ENCODE measurements at regions of chr12 and their contacts with region 1.

Region 1: GRCh38 chr12:47705566-47706425 is at the start of gene RPAP3:
- DNase-seq: peak; percentile 95
- ATAC-seq: peak; percentile 90
- H3K4me3 ChIP-seq: peak within 1 kb of the TSS; percentile 62 to 98 (median 83)
- H3K4me3 Mint-ChIP-seq: peak within 1 kb of the TSS; percentile 93
- H3K27ac ChIP-seq: peak within 1 kb of the TSS; percentile 88
- H3K27ac Mint-ChIP-seq: peak within 1 kb of the TSS; percentile 94
- H3K4me1 ChIP-seq: peaks cover 59 to 61% of the 10 kb centered on the region in 2 donors
- H3K4me1 Mint-ChIP-seq: peaks cover 71% of the 10 kb centered on the region
- H3K27me3 ChIP-seq: no peaks in the 10 kb centered on the region
- H3K27me3 Mint-ChIP-seq: no peaks in the 10 kb centered on the region
- CTCF ChIP-seq: peak; percentile 81
- total RNA-seq, gene RPAP3: 47.2 and 49.4 TPM in 2 replicates

Region 2: DNA sequence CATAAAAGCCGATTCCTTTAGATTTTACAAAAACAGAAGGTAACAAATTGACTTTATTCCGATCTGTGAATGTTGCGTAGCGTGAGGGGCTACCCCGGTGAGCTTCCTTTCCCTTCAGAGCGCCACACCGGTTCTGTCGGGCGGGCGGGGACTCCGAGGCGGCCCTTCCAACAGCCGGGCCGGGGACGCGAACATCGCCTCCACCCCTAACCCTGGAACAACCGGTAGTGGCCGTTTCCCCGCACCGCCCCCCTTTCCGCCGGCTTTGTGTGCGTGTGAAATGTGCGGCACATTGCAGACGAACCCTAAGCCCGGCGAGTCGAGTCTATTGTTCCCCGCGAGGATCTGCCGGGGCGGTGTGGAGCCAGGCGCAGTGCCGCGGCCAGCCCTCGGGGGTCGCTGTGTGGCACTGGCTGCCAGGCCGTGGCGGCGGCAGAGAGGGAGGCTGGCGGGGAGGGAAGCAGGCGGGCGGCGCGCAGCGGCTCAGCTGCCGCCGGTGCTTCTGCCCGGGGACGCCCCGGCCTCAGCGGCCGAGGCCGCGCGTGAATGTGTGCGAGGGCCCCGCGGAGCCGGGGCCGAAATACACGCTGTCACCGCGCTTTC is 1977.1 kb before region 1 on chr12:
- CTCF ChIA-PET with region 1: no interaction called
- POLR2A ChIA-PET with region 1: no interaction called
- intact Hi-C with region 1: loop called (anchors 2 kb)
- DNase-seq: peak; percentile 98
- ATAC-seq: peak; percentile 68
- H3K4me3 ChIP-seq: peak overlapping the region; percentile 87 to 98 (median 95)
- H3K4me3 Mint-ChIP-seq: peak overlapping the region; percentile 100
- H3K27ac ChIP-seq: peak overlapping the region; percentile 98 to 99
- H3K27ac Mint-ChIP-seq: peak overlapping the region; percentile 99
- H3K4me1 ChIP-seq: peaks cover 16 to 38% of the 10 kb centered on the region in 2 donors
- H3K4me1 Mint-ChIP-seq: peaks cover 36% of the 10 kb centered on the region
- H3K27me3 ChIP-seq: no peaks in the 10 kb centered on the region
- H3K27me3 Mint-ChIP-seq: no peaks in the 10 kb centered on the region
- CTCF ChIP-seq: peak; percentile 93

Region 3: DNA sequence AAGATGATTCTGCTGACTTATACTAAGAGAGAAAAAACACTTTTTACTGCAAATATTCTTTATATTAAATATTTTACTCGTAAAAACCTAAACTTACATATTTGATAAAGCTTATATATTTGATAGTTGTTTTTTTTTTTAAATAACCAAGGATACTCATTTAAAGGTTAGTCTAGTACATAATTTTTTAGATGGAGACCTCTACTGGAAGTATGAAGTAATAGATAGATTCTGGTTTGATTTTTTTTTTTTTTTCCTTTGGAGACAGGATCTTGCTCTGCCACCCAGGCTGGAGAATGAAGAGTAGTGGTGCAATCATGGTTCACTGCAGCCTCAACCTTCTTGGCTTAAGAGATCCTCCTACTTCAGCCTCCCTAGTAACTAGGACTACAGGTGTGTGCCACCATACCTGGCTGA is 1959.9 kb before region 1 on chr12:
- CTCF ChIA-PET with region 1: no interaction called
- POLR2A ChIA-PET with region 1: no interaction called
- intact Hi-C with region 1: no loop called
- DNase-seq: peak; percentile 38
- ATAC-seq: peak; percentile 49
- H3K4me3 ChIP-seq: no peak overlapping the region
- H3K4me3 Mint-ChIP-seq: no peak overlapping the region
- H3K27ac ChIP-seq: no peak overlapping the region
- H3K27ac Mint-ChIP-seq: no peak overlapping the region
- H3K4me1 ChIP-seq: peaks cover 0 to 4% of the 10 kb centered on the region in 2 donors
- H3K4me1 Mint-ChIP-seq: peaks cover 11% of the 10 kb centered on the region
- H3K27me3 ChIP-seq: no peaks in the 10 kb centered on the region
- H3K27me3 Mint-ChIP-seq: no peaks in the 10 kb centered on the region
- CTCF ChIP-seq: peak; percentile 66

Region 4: DNA sequence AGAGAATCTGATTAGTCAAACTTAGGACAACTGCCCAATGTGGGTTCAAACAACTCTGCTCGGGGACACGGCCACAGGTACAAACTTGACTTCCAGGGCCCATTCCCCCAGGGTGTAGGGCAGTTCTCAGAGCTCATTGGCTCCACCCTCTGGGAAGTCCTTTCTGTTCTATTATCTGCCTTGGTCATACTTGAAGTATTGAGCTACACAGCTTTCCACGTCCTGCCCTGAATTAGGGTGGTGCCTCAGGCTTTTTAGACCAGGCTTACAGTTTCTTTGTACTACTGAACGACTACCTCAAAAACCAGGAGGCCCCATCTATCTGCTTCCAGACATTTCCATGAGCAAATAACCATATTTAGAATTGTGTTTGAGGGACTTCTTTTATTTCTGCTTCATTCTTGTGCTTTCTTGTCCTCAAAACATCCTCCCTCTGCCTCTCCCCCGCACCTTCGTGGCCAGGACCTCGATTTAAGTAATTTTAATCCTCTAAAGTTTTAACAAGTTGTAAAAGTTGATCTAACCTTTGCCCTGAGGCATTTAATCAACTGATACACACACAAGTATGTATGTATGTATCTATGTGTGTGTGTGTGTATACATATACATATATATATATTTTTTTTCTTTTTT is 344.3 kb before region 1 on chr12:
- CTCF ChIA-PET with region 1: no interaction called
- POLR2A ChIA-PET with region 1: no interaction called
- intact Hi-C with region 1: loop called (anchors 2 kb)
- DNase-seq: peak; percentile 76
- ATAC-seq: peak; percentile 51
- H3K4me3 ChIP-seq: peak overlapping the region; percentile 24 to 52 (median 47)
- H3K4me3 Mint-ChIP-seq: peak overlapping the region; percentile 87
- H3K27ac ChIP-seq: peak overlapping the region; percentile 93 to 96
- H3K27ac Mint-ChIP-seq: peak overlapping the region; percentile 98
- H3K4me1 ChIP-seq: peaks cover 71% of the 10 kb centered on the region in 2 donors
- H3K4me1 Mint-ChIP-seq: peaks cover 62% of the 10 kb centered on the region
- H3K27me3 ChIP-seq: no peaks in the 10 kb centered on the region
- H3K27me3 Mint-ChIP-seq: no peaks in the 10 kb centered on the region
- CTCF ChIP-seq: no peak

Region 5: GRCh38 chr12:47383942-47384341 is 321.9 kb before region 1 on chr12:
- CTCF ChIA-PET with region 1: no interaction called
- POLR2A ChIA-PET with region 1: no interaction called
- intact Hi-C with region 1: no loop called
- DNase-seq: no peak
- ATAC-seq: no peak
- H3K4me3 ChIP-seq: no peak overlapping the region
- H3K4me3 Mint-ChIP-seq: peak overlapping the region; percentile 30
- H3K27ac ChIP-seq: no peak overlapping the region
- H3K27ac Mint-ChIP-seq: peak overlapping the region; percentile 42
- H3K4me1 ChIP-seq: peaks cover 21 to 22% of the 10 kb centered on the region in 2 donors
- H3K4me1 Mint-ChIP-seq: peaks cover 50% of the 10 kb centered on the region
- H3K27me3 ChIP-seq: no peaks in the 10 kb centered on the region
- H3K27me3 Mint-ChIP-seq: no peaks in the 10 kb centered on the region
- CTCF ChIP-seq: no peak

Region 6: DNA sequence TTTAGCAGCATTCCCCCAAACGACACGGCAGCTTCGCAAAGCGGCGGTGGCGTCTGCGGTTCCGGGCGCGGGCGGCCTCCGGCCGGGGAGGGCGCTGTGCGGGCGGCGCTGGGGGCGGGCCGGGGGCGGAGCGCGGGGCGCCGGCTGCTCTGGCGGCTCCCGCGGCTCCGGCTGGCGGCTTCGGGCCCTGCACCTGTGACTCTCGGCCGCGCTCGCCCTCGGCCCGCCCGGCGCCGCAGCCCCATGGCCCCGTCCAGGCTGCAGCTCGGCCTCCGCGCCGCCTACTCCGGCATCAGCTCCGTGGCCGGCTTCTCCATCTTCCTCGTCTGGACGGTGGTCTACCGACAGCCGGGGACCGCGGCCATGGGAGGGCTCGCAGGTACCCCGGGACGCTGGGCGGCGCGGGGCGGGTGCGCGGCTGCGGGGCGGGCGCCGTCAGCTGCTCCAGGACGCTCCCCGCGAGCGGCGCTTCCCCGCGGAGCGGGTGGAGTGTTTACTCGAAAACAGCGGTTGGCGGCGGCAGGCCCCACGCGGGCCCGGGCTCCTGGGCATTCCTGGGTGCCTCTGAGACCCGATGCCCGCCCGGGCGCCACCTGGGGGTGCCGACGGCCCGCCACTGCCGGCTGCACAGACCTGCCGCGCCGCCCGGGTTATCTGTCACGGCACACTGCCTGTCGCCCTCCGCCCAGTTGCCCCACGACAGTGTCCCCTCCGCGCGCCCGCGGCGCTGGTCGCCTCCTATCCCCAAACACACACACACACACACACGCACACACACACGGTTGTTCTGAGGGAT is 67.5 kb after region 1 on chr12 and contains the start of gene SLC48A1:
- CTCF ChIA-PET with region 1: interaction called, 584 read pairs
- POLR2A ChIA-PET with region 1: interaction called, 7 read pairs
- intact Hi-C with region 1: loop called (anchors 2 kb)
- DNase-seq: peak; percentile 88
- ATAC-seq: peak; percentile 92
- H3K4me3 ChIP-seq: peak within 1 kb of the TSS in 4 of 5 experiments; percentile 39 to 75 (median 62)
- H3K4me3 Mint-ChIP-seq: peak within 1 kb of the TSS; percentile 93
- H3K27ac ChIP-seq: peak within 1 kb of the TSS; percentile 53 to 54
- H3K27ac Mint-ChIP-seq: peak within 1 kb of the TSS; percentile 86
- H3K4me1 ChIP-seq: peaks cover 6 to 27% of the 10 kb centered on the region in 2 donors
- H3K4me1 Mint-ChIP-seq: peaks cover 24% of the 10 kb centered on the region
- H3K27me3 ChIP-seq: no peaks in the 10 kb centered on the region
- H3K27me3 Mint-ChIP-seq: no peaks in the 10 kb centered on the region
- CTCF ChIP-seq: peak; percentile 36
- total RNA-seq, gene SLC48A1: 20.0 and 25.1 TPM in 2 replicates

Region 7: DNA sequence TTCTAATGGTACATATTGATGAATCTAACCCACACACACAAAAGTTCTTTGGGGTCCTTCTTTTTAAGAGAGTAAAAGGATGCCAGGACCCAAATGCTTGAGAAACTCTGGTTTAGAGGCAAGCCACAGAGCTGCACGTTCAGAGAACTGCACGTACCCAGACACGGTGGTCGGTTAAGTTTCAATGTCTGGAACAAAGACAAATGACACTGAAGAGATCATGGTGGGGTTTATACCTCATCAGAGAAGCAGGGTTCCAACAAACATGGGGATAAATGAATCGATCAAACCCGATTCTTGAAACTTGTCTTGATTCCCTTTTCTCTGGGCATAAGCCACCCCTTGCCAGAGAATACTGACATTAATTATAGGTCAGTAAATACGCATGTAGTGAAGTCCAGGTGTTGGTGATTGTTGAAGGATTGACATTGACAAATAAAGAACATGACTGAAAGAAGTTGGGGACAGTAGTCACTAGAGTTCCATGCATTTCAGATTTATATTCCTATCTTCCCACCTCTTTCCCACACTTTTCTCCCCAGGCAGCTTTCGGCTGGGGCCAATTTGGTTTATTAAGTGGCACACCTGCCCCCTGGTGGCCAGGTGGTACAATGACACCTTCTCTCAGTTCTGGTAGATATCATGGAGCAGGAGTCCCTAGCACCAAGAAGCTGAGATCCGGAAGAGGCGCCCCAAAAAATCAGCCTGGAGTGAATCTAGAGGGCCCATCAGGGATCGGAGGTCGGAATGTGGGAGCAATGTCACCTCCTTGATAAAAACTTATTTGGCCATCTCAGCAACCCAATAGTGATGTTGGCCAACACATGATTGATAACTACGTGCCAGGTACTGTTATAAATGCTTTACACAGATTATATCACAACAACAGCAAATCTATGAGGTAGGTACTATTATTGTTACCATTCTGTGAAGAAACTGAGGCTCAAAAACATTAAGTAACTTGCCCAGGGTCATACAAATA is 131.7 kb after region 1 on chr12:
- CTCF ChIA-PET with region 1: interaction called, 300 read pairs
- POLR2A ChIA-PET with region 1: interaction called, 4 read pairs
- intact Hi-C with region 1: no loop called
- DNase-seq: peak; percentile 84
- ATAC-seq: peak; percentile 50
- H3K4me3 ChIP-seq: no peak overlapping the region
- H3K4me3 Mint-ChIP-seq: peak overlapping the region; percentile 49
- H3K27ac ChIP-seq: no peak overlapping the region
- H3K27ac Mint-ChIP-seq: peak overlapping the region; percentile 77
- H3K4me1 ChIP-seq: peaks cover 46 to 53% of the 10 kb centered on the region in 2 donors
- H3K4me1 Mint-ChIP-seq: peaks cover 53% of the 10 kb centered on the region
- H3K27me3 ChIP-seq: no peaks in the 10 kb centered on the region
- H3K27me3 Mint-ChIP-seq: no peaks in the 10 kb centered on the region
- CTCF ChIP-seq: peak; percentile 95

Region 8: DNA sequence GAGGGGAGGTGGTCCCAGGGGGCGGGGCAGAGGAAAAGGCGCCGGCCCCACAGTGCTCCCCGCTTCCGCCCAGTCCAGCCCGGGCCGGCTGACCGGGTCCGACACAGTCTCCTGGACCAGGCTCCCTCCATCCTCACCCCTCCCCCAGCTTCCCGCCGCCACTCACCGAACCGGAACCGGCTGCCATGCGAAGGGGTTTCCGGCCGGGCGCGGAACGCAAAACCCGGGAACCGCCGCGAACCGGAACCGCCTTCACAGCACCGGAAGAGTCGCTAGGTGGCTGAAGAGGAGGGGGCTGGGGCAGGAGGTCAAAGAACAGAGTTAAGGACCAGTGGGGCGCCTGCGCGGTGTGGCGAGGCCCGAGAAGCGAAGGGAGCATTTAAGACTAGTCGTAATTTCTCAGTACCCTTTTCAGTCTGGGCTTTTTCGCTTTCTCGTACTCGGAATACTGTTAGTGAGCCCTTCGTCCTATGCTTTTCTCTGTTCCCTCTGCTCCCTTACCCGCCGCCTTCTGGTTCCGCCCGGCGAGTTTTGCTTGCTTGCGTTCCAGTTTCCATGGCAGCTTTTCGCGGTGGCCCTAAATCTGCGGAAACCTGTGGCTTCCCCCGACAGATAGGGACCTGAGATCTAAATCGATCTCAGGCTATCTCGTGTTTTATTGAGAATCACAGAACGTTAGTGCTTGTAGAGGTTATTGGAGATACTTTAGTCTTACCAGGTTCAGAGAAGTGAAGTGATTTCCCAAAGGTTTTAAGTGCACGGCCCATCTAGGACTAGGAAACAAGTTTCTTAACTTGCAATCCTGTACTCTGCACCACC is 400.3 kb after region 1 on chr12 and contains the start of gene SENP1:
- CTCF ChIA-PET with region 1: no interaction called
- POLR2A ChIA-PET with region 1: no interaction called
- intact Hi-C with region 1: loop called (anchors 5 kb)
- DNase-seq: peak; percentile 96
- ATAC-seq: peak; percentile 78
- H3K4me3 ChIP-seq: peak within 1 kb of the TSS; percentile 61 to 94 (median 80)
- H3K4me3 Mint-ChIP-seq: peak within 1 kb of the TSS; percentile 89
- H3K27ac ChIP-seq: peak within 1 kb of the TSS; percentile 93 to 99
- H3K27ac Mint-ChIP-seq: peak within 1 kb of the TSS; percentile 95
- H3K4me1 ChIP-seq: peaks cover 20% of the 10 kb centered on the region in 2 donors
- H3K4me1 Mint-ChIP-seq: peaks cover 38% of the 10 kb centered on the region
- H3K27me3 ChIP-seq: no peaks in the 10 kb centered on the region
- H3K27me3 Mint-ChIP-seq: no peaks in the 10 kb centered on the region
- CTCF ChIP-seq: peak; percentile 28
- total RNA-seq, gene SENP1: 43.8 and 44.8 TPM in 2 replicates

Measured in B cell (primary cell).